PC-9 (cell line): ENCODE measurements at regions of chr1 and their contacts with region 1.

Region 1: GRCh38 chr1:204806943-204807687 is 63.5 kb upstream of the NFASC start:
- DNase-seq: peak; percentile 66 to 83
- H3K4me3 ChIP-seq: peak overlapping the region; percentile 56
- H3K27ac ChIP-seq: no peak overlapping the region
- H3K4me1 ChIP-seq: peaks cover 4% of the 10 kb centered on the region; the same call in 1 of the 2 replicates
- H3K27me3 ChIP-seq: peaks cover 14% of the 10 kb centered on the region; the same call in 1 of the 2 replicates
- CTCF ChIP-seq: peak; percentile 99

Region 2: GRCh38 chr1:204162231-204163074 is 644.7 kb before region 1 on chr1:
- CTCF ChIA-PET with region 1: no interaction called
- POLR2A ChIA-PET with region 1: no interaction called
- intact Hi-C with region 1: loop called (anchors 1 kb)
- DNase-seq: peak; percentile 93 to 94
- H3K4me3 ChIP-seq: no peak overlapping the region
- H3K27ac ChIP-seq: 0 out of 2 replicates have a peak overlapping the region, but pooled peaks have one; percentile 28
- H3K4me1 ChIP-seq: peaks cover 21% of the 10 kb centered on the region
- H3K27me3 ChIP-seq: no peaks in the 10 kb centered on the region
- CTCF ChIP-seq: peak; percentile 99

Region 3: DNA sequence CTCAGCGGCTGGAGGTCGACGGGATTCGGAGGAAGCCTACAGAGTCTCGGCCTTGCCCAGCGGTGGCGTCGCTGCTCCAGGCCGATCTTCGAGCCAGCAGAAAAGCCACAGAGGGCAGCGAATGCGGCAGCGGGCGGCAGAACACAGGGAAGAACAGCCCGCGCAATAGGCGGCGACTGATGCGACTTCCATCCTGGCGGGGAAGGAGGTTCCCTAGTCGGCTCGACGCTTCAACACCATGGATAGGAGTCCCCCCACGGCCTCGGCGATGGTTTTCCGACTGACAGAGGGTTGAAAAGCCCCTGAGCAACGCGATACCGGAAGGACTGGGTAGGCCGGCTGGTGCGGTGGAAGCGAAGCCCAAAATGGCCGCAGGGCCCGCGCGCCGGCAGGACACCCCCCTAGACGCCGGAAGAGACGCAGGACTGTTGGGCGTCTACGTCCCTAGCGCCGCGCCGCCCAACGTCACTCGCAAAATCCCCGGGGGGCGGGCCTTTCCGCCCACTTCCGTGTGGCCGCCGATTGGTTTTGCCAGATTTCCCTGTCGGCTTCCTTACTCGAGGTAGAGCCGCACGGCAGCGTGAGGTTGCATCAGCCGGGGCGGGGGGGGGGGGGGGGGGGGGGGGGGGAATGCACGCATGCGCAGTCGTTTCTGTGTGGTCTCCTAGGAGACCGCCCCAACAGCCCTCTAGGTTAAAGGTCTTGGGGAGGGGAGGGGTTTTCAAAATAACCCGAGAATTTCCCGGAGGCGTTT is 395.5 kb before region 1 on chr1 and contains the start of gene PPP1R15B:
- CTCF ChIA-PET with region 1: no interaction called
- POLR2A ChIA-PET with region 1: no interaction called
- intact Hi-C with region 1: loop called (anchors 10 kb)
- DNase-seq: peak; percentile 97
- H3K4me3 ChIP-seq: peak within 1 kb of the TSS; percentile 94
- H3K27ac ChIP-seq: peak within 1 kb of the TSS; percentile 89
- H3K4me1 ChIP-seq: peaks cover 28% of the 10 kb centered on the region
- H3K27me3 ChIP-seq: no peaks in the 10 kb centered on the region
- CTCF ChIP-seq: no peak
- total RNA-seq, gene PPP1R15B: 37.3 and 40.9 TPM in 2 replicates

Region 4: DNA sequence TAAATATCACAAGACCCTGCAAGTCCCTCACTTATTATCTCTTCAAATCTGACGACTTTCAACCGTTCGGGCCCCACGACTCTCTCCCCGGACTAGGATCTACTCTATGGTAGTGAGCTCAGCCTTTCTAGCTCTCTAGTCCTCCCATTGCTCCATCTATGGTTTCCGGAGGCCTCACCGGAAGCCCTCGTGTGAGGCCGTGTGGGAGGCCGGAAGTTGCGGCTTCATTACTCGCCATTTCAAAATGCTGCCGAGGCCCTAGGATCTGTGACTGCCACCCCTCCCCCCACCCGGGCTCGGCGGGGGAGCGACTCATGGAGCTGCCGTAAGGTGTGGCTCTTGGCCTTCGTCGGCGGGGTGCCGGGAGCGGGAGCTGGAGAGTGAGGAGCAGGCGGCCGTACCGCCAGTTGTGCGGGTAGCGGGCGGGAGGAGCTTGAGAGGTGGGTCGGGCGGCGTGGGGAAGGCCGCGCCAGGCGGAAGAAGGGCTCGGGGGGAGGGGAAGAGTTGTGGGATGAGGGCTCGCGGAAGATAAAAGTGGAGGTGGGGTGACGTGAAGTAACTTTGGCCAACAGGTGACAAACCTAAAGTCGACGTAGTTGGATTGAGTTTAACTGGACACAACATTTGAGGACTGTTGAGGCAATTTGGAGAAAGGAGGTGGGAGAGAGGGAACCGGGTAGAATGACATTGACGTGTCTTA is 290.8 kb before region 1 on chr1 and contains the start of gene MDM4:
- CTCF ChIA-PET with region 1: interaction called, 14 read pairs
- POLR2A ChIA-PET with region 1: no interaction called
- intact Hi-C with region 1: no loop called
- DNase-seq: peak; percentile 90 to 93
- H3K4me3 ChIP-seq: peak within 1 kb of the TSS; percentile 70
- H3K27ac ChIP-seq: peak within 1 kb of the TSS; percentile 94
- H3K4me1 ChIP-seq: peaks cover 11% of the 10 kb centered on the region
- H3K27me3 ChIP-seq: no peaks in the 10 kb centered on the region
- CTCF ChIP-seq: no peak
- total RNA-seq, gene MDM4: 69.2 and 82.6 TPM in 2 replicates

Region 5: DNA sequence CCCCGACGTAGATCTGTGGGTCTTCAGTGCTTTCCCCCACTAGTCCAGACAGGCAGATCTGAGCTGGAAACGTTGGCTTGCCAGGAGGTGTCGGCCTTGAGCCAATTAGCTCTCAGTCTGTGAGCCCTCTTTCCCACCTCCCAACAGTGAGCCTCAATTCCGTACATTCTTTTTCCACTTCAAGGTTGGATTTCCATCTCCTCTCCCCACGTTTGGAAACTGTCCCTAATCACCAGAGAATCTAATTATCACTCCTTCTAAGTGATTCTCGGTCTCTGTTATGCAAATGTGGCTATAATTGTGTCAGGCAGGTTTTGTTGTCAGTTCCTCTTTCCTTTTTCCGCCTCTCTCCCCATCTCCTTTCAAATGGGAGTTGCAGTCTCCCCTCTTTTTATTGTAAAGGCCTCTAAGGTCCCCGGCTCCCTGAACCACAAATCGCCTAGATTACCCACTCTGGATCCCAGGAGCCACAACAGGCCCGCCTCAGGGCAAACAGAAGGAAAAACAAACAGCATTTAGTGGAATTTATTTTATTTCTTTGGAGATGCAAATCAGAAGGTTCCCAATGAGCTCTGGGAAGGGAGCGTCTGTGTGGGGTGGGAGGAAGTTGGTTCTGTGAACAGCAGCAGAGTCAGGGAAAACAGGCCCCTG is 92.1 kb before region 1 on chr1:
- CTCF ChIA-PET with region 1: no interaction called
- POLR2A ChIA-PET with region 1: no interaction called
- intact Hi-C with region 1: no loop called
- DNase-seq: no peak
- H3K4me3 ChIP-seq: no peak overlapping the region
- H3K27ac ChIP-seq: no peak overlapping the region
- H3K4me1 ChIP-seq: no peaks in the 10 kb centered on the region
- H3K27me3 ChIP-seq: peaks cover 5% of the 10 kb centered on the region; the same call in 1 of the 2 replicates
- CTCF ChIP-seq: no peak

Region 6: DNA sequence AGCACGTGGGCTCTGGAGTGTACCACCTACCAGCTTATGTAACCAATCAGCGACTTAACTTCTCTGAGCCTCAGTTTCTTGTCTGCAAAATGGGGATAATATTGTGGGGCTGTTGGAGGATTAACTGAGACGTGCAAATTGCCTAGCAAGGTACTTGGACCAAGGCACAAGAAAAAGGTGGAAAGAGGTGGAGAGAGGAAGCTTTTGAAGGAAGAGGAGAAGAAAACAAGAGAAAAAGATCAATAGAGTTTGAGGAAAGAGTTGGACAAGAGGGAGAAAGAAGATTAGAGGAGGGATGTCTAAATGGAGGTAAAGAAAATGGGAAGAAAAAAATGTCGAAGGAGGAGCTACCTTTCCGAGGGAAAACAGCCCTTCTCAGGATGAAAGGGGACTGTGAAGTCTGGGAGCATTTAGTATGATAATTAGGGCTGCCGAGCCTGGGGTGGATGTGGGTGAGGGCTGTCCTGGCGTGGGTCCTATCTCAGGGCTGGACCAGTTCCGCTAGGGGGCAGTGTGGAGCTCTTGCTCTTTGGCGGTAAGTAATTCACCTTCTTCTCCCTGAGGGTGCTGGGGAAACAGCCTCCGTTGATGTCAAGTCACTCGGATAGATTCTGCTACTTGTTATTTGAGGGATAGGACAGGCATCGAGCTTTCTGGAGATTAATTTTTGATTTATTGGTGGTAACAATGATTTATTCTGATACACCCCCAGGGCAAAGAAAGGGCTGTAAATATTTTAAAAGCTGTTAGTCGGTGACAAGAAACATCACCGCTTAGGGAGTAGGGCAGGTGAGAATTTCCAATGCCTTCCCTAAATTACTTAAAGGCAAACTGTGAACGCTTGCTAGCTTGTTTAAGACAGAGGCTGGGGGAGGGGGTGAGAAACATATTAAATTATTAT is 15.4 kb before region 1 on chr1:
- CTCF ChIA-PET with region 1: interaction called, 20 read pairs
- POLR2A ChIA-PET with region 1: no interaction called
- intact Hi-C with region 1: no loop called
- DNase-seq: peak in 1 of 2 experiments; percentile 59
- H3K4me3 ChIP-seq: no peak overlapping the region
- H3K27ac ChIP-seq: no peak overlapping the region
- H3K4me1 ChIP-seq: no peaks in the 10 kb centered on the region
- H3K27me3 ChIP-seq: 0 out of 2 replicates have a peak, but pooled peaks cover 27% of the 10 kb centered on the region
- CTCF ChIP-seq: peak; percentile 85

Region 7: GRCh38 chr1:204879351-204879750 is 72.2 kb after region 1 on chr1:
- CTCF ChIA-PET with region 1: no interaction called
- POLR2A ChIA-PET with region 1: no interaction called
- intact Hi-C with region 1: no loop called
- DNase-seq: no peak
- H3K4me3 ChIP-seq: no peak overlapping the region
- H3K27ac ChIP-seq: no peak overlapping the region
- H3K4me1 ChIP-seq: no peaks in the 10 kb centered on the region
- H3K27me3 ChIP-seq: peaks cover 74% of the 10 kb centered on the region
- CTCF ChIP-seq: no peak

Region 8: DNA sequence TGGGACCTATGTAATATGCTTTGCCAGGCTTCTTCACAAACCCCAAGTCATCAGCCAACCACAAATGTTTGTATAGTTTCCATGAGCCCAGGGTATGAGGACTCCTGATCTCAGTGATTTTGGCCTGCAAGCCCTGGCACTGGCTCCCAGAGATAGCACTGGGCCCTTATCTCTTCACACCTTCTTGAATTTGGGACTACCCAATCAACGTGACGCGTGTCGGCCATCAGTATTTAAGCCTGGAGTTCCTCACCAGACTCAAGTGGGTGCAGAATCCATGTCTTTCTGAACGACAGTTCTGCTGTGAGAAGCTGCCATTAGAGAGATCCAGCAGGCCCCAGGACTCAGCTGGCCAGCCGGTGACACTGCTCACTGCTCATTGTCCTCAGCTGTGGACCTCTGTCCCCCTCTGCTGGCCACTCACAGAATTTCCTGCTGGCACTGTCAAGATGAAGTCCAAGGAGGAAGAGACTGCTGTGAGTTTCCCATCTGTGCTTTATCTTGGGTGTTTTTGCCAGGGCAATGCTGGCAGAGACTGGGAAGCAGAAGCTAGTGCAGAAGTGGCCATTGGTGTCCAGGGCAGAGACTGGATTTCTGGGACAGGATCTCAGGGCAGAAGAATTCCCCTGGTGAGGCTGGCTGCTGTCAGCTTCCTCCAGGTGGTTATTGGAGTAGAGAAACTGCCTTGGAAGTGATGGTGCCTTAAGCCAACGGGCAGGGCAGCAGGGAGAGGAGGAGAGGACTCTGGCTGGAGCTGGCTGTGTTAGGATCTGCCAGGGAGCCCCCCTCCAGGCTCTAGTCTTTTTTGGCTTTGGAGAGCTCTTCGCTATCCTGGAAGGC is 449.0 kb after region 1 on chr1:
- CTCF ChIA-PET with region 1: interaction called, 4 read pairs
- POLR2A ChIA-PET with region 1: no interaction called
- intact Hi-C with region 1: loop called (anchors 1 kb)
- DNase-seq: peak; percentile 71 to 87
- H3K4me3 ChIP-seq: no peak overlapping the region
- H3K27ac ChIP-seq: no peak overlapping the region
- H3K4me1 ChIP-seq: 0 out of 2 replicates have a peak, but pooled peaks cover 5% of the 10 kb centered on the region
- H3K27me3 ChIP-seq: peaks cover 2% of the 10 kb centered on the region; the same call in 1 of the 2 replicates
- CTCF ChIP-seq: peak; percentile 97